Activated CD8-positive, alpha-beta T cell treated with anti-CD3 and anti-CD28 coated beads for 36 hours (primary cell): ENCODE measurements at regions of chr6 and their contacts with region 1.

Region 1: GRCh38 chr6:2952557-2953095 is 18.7 kb downstream of the SERPINB6 start:
- DNase-seq: peak; percentile 77
- ATAC-seq: peak; percentile 97
- H3K4me3 Mint-ChIP-seq: peak overlapping the region; percentile 44
- H3K27ac Mint-ChIP-seq: peak overlapping the region; percentile 68
- H3K4me1 Mint-ChIP-seq: peaks cover 13% of the 10 kb centered on the region
- H3K27me3 Mint-ChIP-seq: no peaks in the 10 kb centered on the region
- CTCF ChIP-seq: peak; percentile 99

Region 2: DNA sequence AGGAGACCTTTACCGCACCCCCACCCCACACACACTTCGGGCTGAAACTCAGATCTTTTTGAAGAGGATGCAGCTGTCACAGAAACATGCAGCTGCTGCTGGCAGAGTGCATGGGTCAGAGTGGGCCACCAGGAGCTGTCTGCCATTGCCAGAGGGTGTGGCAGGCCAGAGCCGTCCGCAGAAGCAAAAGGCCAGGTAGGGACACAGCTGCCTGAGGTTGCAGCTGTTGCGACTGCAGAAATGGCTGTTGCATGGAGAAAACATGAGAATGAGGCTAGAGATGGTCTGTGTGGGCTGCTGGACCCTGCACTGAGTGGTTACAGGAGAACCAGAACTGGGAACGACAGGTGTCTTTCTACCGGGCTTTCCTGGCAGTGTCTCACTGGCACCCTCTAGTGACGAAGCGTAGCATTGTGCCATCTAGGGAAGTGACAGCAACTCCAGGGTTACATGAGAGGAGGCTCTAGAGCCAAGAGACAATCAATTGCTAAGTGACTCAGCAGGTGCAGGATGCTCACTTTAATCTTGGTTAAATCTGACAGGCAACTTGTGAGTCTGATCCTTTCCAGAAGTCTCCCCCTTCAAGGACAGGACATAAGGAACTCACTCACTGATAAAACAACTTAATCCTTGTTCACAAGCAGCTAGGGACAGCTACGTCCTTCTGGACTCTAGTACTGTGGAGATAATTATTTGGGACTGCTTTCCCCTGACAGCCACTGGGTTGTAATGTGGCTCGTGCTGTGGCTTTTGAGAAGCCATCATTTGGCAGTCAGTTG is 20.5 kb before region 1 on chr6:
- CTCF ChIA-PET with region 1: interaction called, 12 read pairs
- POLR2A ChIA-PET with region 1: interaction called, 7 read pairs
- intact Hi-C with region 1: no loop called
- DNase-seq: peak; percentile 94
- ATAC-seq: peak; percentile 90
- H3K4me3 Mint-ChIP-seq: no peak overlapping the region
- H3K27ac Mint-ChIP-seq: peak overlapping the region; percentile 67
- H3K4me1 Mint-ChIP-seq: peaks cover 27% of the 10 kb centered on the region
- H3K27me3 Mint-ChIP-seq: no peaks in the 10 kb centered on the region
- CTCF ChIP-seq: peak; percentile 96

Region 3: GRCh38 chr6:2966347-2966746 is 13.7 kb after region 1 on chr6:
- CTCF ChIA-PET with region 1: interaction called, 37 read pairs
- POLR2A ChIA-PET with region 1: interaction called, 7 read pairs
- intact Hi-C with region 1: no loop called
- DNase-seq: no peak
- ATAC-seq: no peak
- H3K4me3 Mint-ChIP-seq: no peak overlapping the region
- H3K27ac Mint-ChIP-seq: no peak overlapping the region
- H3K4me1 Mint-ChIP-seq: peaks cover 46% of the 10 kb centered on the region
- H3K27me3 Mint-ChIP-seq: no peaks in the 10 kb centered on the region
- CTCF ChIP-seq: no peak

Region 4: DNA sequence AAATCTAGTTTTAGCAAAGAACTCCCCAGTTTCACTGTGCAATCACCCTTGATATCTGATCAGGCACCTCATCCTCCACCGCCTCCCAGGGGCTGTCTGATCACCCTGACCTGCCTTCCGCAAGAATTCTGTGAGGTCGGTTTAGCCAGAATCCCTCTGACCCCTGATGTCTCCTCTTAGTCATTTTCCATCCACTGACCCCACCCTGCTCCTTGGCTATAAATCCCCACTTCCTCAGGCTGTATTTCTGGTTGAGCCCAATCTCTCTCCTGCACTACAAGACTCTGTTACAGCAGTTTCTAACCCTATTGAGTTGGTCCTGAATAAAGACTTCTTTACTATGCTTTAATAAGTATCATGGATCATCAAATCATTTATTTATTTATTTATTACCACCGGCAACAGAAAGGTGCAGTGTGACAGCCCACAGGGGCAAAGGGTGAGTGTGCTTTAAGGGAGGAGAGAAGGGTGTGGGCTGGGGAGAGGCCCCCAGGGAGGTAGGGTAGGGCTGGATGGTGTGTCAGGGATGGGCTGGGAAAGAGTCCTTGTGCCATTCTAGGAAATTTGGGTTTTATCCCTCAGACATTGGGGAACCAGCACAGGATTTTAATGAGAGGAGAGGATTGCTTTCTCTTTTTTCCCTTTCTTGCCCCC is 30.0 kb after region 1 on chr6:
- CTCF ChIA-PET with region 1: interaction called, 85 read pairs
- POLR2A ChIA-PET with region 1: no interaction called
- intact Hi-C with region 1: no loop called
- DNase-seq: no peak
- ATAC-seq: no peak
- H3K4me3 Mint-ChIP-seq: no peak overlapping the region
- H3K27ac Mint-ChIP-seq: no peak overlapping the region
- H3K4me1 Mint-ChIP-seq: peaks cover 6% of the 10 kb centered on the region
- H3K27me3 Mint-ChIP-seq: peaks cover 2% of the 10 kb centered on the region
- CTCF ChIP-seq: no peak

Region 5: DNA sequence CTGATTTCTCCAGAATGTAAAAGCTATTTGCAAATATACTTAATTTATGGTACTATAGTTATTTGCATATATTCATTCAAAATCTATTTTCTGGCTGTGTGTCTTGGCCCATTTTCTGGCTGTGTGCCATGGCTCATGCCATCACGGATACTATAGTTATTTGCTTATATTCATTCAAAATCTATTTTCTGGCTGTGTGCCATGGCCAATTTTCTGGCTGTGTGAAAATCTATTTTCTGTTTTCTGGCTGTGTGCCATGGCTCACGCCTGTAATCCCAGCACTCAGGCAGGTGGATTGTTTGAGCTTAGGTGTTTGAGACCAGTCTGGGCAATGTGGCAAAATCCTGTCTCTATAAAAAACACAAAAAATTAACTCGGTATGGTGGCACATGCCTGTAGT is 86.8 kb after region 1 on chr6:
- CTCF ChIA-PET with region 1: no interaction called
- POLR2A ChIA-PET with region 1: no interaction called
- intact Hi-C with region 1: no loop called
- DNase-seq: no peak
- ATAC-seq: no peak
- H3K4me3 Mint-ChIP-seq: no peak overlapping the region
- H3K27ac Mint-ChIP-seq: no peak overlapping the region
- H3K4me1 Mint-ChIP-seq: no peaks in the 10 kb centered on the region
- H3K27me3 Mint-ChIP-seq: no peaks in the 10 kb centered on the region
- CTCF ChIP-seq: no peak